ENCODE measurements at regions of chr7 and their contacts with region 1.

Region 1: GRCh38 chr7:18559756-18560155 is 64.2 kb downstream of the HDAC9 start:
- DNase-seq: no peak

Region 2: DNA sequence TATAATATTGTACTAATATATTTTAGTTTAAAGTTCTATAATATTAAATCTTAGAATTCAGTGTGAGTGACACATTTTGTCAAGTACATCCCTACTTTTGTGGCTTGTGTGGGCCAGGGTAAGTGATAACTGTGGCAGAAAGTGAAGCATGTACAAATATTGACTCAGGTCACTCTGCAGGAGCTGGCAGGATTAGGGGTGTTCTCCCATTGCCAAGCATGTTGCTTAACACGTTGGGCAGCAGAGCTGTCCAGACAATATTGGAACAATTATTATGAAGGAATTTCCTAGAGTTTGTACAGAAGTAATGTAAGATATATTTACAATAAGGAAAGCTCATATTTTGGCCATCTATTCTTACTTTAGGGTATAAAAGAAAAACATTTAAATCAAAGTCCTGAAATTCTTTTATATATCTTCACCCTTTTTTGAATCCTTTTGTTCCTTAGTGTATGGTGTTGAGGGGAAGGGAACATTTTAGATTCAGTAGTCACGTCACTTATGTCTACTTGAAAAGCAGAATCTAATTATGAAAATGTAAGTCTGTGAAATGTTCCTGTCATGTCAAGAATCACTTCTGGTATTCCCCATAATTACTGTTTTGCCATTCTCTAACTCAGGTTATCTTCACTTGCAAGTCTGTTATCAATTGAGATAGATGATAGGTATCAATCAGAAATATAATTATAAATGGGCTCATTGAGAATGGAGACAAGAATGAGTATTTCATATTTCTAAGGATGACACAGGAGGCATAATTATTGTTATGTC is 60.2 kb before region 1 on chr7:
- intact Hi-C with region 1: loop called (anchors 5 kb)
- DNase-seq: no peak

Measured in posterior cingulate gyrus (tissue), 11 donors.